H1 (cell line): ENCODE measurements at regions of chr14 and their contacts with region 1.

Region 1: DNA sequence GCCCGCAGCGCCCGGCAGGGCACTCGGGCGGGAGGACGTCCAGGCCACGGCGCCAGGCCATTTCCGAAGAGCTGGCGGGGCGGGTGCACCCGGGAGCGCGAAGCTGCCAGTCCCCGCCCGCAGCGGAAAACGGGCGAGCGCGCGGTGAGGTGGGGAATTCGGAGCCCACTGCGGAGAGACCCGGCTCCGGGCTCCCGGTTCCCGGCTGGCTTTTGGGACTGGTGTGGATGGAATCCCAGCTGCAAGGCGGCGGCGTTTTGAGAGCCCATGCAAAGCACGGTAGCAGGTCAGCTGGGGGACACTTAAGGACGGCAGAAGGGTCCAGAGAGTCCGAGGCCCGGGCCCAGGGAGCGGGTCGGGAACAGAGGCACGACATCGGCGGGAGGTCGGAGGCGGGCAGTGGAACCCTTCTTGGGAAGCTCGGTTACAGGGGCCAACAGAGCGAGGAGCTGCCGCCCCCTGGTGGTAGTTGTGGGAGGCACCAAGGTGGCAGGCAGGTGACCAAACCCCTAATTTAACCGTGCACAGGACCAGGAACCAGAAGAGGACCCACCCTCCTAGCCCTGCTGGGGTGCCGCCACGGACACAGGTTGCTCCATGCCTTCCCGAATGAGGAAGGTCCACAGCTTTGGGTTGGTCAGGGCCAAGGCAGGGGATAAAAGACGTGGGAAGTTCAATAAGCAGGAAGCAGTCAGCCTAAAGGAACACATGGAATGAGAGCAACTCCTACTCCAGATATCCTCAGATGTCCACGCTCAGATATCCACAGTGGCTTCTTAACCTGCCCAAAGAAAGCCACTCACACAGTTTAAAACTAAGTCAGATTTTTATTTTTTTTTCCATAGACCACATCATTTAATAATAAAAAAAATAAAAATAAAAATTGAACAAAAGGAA is 685 bp upstream of the CDH24 start:
- DNase-seq: peak; percentile 86 to 98
- H3K4me3 ChIP-seq: peak overlapping the region; percentile 34 to 82 (median 65)
- H3K27ac ChIP-seq: peak overlapping the region; percentile 64; the same call in 1 of the 2 replicates
- H3K4me1 ChIP-seq: peaks cover 0 to 15% (median 4%) of the 10 kb centered on the region in 4 experiments; a peak in 4 of 7 replicates
- H3K27me3 ChIP-seq: no peaks in the 10 kb centered on the region; a peak in 1 of 7 replicates
- CTCF ChIP-seq: peak; percentile 87 to 96 (median 95)
- EP300 ChIP-seq: no peak
- POLR2A ChIP-seq: peak in 1 of 2 experiments; percentile 61; a peak in 2 of 3 replicates
- RAD21 ChIP-seq: peak; percentile 79 to 80

Region 2: DNA sequence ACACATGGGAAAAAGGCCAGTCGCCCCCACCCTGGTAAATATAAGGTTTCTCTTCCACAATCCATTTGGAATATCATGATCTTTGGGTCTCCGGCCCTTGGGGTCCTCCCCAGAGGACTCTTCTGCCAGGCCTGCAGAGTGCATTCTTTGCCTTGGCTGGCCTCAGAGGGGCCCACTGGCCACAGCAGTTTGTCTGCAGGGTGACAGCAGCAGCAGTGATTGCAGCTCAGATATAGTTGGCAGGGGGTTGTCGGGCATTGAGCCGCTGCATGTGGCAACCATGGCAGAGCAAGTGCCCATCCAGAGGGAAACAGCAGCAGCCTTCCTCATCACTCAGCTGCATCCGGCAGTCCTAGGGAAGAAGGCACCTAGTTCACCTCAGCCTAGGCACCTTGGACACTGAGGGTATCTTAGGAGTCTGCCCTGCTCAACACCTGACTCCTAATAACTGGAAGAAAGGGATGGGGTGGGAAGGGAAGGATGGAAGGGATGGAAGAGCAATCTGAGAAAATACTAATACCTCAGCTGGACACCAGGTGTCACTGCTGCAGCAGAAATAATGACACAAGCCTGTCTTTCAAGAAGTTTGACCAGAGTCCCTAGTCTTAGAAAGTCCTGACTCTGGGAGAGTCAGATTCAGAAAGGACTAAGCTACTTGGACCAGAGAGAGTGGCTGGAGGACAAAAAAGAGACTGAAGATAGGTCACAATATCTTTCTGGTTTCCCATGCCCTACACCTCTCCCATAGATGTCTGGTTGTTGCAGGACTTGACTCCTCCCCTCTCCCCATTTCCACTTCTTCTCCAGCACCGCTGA is 84.6 kb before region 1 on chr14:
- CTCF ChIA-PET with region 1: interaction called, 19 read pairs
- POLR2A ChIA-PET with region 1: interaction called, 14 read pairs
- DNase-seq: peak in 1 of 2 experiments; percentile 66
- H3K4me3 ChIP-seq: no peak overlapping the region
- H3K27ac ChIP-seq: no peak overlapping the region
- H3K4me1 ChIP-seq: peaks cover 13 to 20% (median 18%) of the 10 kb centered on the region in 4 experiments
- H3K27me3 ChIP-seq: no peaks in the 10 kb centered on the region
- CTCF ChIP-seq: peak in 2 of 3 experiments; percentile 75 to 76; a peak in 3 of 4 replicates
- EP300 ChIP-seq: no peak
- POLR2A ChIP-seq: no peak; a peak in 1 of 3 replicates
- RAD21 ChIP-seq: peak; percentile 84 to 88

Region 3: DNA sequence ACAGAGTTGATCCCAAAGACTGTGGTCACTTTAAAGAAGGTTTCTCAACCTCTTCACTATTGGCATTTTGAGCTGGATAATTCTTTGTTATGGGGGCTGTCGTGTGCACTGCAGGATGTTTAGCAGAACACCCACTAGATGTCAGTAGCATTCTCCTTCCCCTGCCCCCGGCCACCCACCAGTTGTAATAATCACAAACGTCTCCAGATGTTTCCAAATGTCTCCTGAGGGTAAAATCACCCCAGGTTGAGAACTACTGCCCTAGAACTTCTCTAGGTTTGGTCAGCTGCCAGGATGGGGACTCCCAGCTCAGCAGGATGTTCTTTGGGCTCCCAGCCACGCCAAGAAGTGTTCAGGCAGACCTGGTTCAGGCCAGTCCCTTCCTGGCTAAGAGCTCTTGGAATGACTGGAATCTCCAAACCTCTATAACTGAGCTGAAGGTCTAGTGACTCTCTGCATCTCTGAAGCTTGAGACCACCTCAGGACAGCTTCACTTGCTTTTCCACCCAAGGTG is 63.2 kb before region 1 on chr14:
- CTCF ChIA-PET with region 1: interaction called, 785 read pairs
- POLR2A ChIA-PET with region 1: interaction called, 26 read pairs
- DNase-seq: no peak
- H3K4me3 ChIP-seq: no peak overlapping the region
- H3K27ac ChIP-seq: no peak overlapping the region
- H3K4me1 ChIP-seq: peaks cover 0 to 5% (median 2%) of the 10 kb centered on the region in 4 experiments; a peak in 2 of 7 replicates
- H3K27me3 ChIP-seq: no peaks in the 10 kb centered on the region
- CTCF ChIP-seq: peak; percentile 38 to 64 (median 46); a peak in 3 of 4 replicates
- EP300 ChIP-seq: no peak
- POLR2A ChIP-seq: no peak
- RAD21 ChIP-seq: peak; percentile 55 to 72

Region 4: DNA sequence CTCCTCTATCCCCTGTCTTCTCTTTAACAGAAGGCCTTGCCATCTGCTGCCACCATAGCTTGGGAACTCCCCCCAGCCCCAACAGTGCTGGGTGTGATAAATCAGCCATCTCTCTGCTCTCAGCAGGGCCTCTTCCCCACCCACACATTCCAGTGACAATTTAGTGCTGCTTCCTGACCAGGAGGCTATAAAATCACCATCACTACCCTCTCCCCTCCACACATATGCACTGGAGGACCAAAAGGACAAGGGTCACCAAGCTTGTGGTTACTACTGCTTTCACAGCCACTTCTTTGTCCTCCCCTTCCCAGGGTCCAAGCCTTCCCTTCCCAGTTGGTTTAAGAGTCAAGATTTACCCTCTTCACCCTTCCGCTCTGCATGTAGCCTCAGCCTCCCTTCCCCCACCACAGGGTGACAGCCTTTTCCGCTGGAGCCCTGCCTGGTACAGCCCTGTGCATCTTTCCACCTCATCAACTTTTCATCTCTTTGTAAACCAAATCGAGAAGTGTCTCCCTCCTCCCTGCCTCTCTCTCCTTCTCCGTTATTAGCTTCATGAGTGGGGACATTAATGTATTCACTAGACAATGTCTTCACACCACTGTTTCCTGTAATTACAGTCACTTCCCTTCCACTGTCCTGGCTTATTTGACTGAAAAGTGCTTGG is 32.7 kb before region 1 on chr14:
- CTCF ChIA-PET with region 1: interaction called, 11 read pairs
- POLR2A ChIA-PET with region 1: interaction called, 5 read pairs
- DNase-seq: no peak
- H3K4me3 ChIP-seq: no peak overlapping the region
- H3K27ac ChIP-seq: no peak overlapping the region
- H3K4me1 ChIP-seq: peaks cover 0 to 3% (median under 1%) of the 10 kb centered on the region in 4 experiments; a peak in 1 of 7 replicates
- H3K27me3 ChIP-seq: no peaks in the 10 kb centered on the region
- CTCF ChIP-seq: no peak
- EP300 ChIP-seq: no peak
- POLR2A ChIP-seq: no peak
- RAD21 ChIP-seq: no peak

Region 5: GRCh38 chr14:23041729-23042128 is 16.3 kb before region 1 on chr14:
- CTCF ChIA-PET with region 1: interaction called, 26 read pairs
- POLR2A ChIA-PET with region 1: interaction called, 13 read pairs
- DNase-seq: no peak
- H3K4me3 ChIP-seq: no peak overlapping the region
- H3K27ac ChIP-seq: no peak overlapping the region
- H3K4me1 ChIP-seq: 0 out of 7 replicates have a peak, but pooled peaks cover 0 to 5% (median 0%) of the 10 kb centered on the region in 4 experiments
- H3K27me3 ChIP-seq: no peaks in the 10 kb centered on the region
- CTCF ChIP-seq: no peak
- EP300 ChIP-seq: no peak
- POLR2A ChIP-seq: no peak
- RAD21 ChIP-seq: no peak

Region 6: DNA sequence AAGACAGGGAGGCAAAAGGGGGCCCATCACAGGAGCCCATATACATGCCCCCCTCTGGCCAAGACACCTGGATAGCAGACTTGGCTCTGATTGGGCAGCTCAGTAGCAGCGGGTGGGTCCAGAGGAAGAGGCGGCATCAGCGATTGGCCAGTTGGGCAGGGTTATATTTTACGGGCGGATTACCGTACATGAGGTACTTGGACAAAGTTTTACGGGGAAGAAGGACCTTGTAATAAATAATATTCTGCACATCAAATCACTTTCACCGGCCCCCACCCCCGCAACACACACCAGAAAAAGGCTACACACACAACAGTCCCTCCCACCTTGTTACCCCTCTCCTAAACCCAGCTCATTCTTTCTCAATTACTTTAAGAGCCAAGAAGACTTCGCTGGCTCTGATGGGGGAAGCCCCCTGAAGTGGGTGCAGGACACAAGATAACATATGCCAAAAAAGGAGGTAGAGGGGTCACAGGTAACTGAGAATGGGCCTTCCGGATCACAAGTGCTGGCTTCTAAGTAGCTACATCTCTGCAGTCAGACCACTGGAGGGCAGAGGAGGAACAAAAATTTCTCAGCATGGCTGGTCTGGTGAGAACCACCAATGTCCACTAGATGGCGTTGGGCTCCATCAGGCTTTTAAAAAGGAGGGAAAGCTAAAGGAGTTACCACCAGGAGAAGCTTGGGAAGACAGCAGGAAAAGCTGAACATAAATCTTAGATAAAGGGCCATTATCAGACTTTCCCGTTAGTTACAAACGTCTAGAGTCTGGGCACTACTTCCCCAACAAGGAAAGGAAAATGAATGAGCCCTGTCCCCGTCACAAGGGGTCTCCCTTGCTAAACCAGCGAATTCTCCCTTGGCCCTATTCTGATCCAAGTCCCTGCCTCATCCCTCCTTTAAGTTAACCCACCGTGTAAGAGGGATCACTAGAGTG is 10.7 kb after region 1 on chr14:
- CTCF ChIA-PET with region 1: interaction called, 55 read pairs
- POLR2A ChIA-PET with region 1: interaction called, 37 read pairs
- DNase-seq: peak; percentile 84 to 85
- H3K4me3 ChIP-seq: peak overlapping the region in 1 of 4 experiments; percentile 18; a peak in 1 of 8 replicates
- H3K27ac ChIP-seq: no peak overlapping the region
- H3K4me1 ChIP-seq: peaks cover 5 to 27% (median 15%) of the 10 kb centered on the region in 4 experiments; a peak in 6 of 7 replicates
- H3K27me3 ChIP-seq: no peaks in the 10 kb centered on the region
- CTCF ChIP-seq: peak; percentile 82 to 99 (median 99)
- EP300 ChIP-seq: no peak
- POLR2A ChIP-seq: no peak
- RAD21 ChIP-seq: peak; percentile 59 to 71

Region 7: DNA sequence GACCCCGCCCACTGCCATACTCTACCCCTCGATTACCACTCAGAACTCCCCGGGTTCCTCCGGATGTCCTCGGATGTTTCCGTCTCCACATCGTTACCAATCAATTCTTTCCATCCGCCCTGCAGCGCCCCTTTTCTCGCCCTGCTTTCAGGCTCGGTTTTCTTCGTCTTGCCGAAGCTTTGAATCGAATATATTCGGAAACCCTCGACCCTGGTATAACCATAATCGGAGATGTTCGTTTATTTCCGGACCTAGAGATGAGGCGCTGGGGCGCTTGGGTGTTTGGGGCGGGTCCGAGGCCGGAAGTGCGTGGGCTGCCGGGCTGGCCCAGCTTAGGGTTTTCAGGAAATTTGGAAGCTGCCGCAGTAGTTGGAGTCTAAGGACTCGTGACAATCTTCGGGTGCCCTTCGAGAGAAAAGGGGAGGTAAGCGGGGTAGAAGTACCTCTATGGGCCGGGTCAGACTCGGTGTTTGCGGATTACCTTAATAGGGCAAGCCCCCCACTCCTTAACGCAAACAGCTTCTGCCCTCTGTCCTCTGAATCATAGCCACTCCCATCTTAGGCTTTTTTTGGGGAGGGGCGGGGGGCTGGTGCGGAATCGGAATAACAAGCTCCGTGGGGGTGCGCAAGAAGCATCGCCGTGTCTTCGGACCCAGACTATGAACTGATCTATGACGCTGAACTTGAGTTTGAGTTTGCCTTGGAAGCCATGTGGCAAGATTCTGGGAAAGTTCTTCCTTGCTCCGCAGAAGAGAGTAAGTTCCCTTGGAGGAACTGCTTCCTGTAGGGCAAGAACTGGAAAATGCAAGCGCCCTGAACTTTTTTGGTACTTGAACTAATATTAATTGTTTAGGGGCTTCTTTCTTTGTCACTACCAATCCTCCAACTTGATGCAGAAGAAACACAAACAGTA is 37.4 kb after region 1 on chr14 and contains the start of gene C14orf119:
- CTCF ChIA-PET with region 1: interaction called, 6 read pairs
- POLR2A ChIA-PET with region 1: interaction called, 17 read pairs
- DNase-seq: peak in 1 of 2 experiments; percentile 96
- H3K4me3 ChIP-seq: peak within 1 kb of the TSS; percentile 92 to 97 (median 96)
- H3K27ac ChIP-seq: peak within 1 kb of the TSS; percentile 99
- H3K4me1 ChIP-seq: no peaks in the 10 kb centered on the region; a peak in 3 of 7 replicates
- H3K27me3 ChIP-seq: no peaks in the 10 kb centered on the region
- CTCF ChIP-seq: no peak
- EP300 ChIP-seq: no peak
- POLR2A ChIP-seq: no peak; a peak in 1 of 3 replicates
- RAD21 ChIP-seq: no peak
- total RNA-seq, gene C14orf119: 78.1 and 91.2 TPM in 2 replicates

Region 8: GRCh38 chr14:23181453-23181852 is 123.4 kb after region 1 on chr14:
- CTCF ChIA-PET with region 1: no interaction called
- POLR2A ChIA-PET with region 1: no interaction called
- DNase-seq: peak in 1 of 2 experiments; percentile 38
- H3K4me3 ChIP-seq: peak overlapping the region; percentile 52 to 83 (median 62)
- H3K27ac ChIP-seq: no peak overlapping the region
- H3K4me1 ChIP-seq: peaks cover 0 to 2% (median 0%) of the 10 kb centered on the region in 4 experiments; a peak in 5 of 7 replicates
- H3K27me3 ChIP-seq: no peaks in the 10 kb centered on the region
- CTCF ChIP-seq: no peak
- EP300 ChIP-seq: no peak
- POLR2A ChIP-seq: no peak
- RAD21 ChIP-seq: no peak